B cell (primary cell): ENCODE measurements at regions of chr2 and their contacts with region 1.

Region 1: GRCh38 chr2:25362049-25362433 is 20.3 kb upstream of the DNMT3A start:
- DNase-seq: peak; percentile 95
- ATAC-seq: peak; percentile 83
- H3K4me3 ChIP-seq: peak overlapping the region; percentile 58 to 91 (median 72)
- H3K4me3 Mint-ChIP-seq: peak overlapping the region; percentile 89
- H3K27ac ChIP-seq: peak overlapping the region; percentile 97 to 98
- H3K27ac Mint-ChIP-seq: peak overlapping the region; percentile 96
- H3K4me1 ChIP-seq: peaks cover 7 to 18% of the 10 kb centered on the region in 2 donors
- H3K4me1 Mint-ChIP-seq: peaks cover 28% of the 10 kb centered on the region
- H3K27me3 ChIP-seq: no peaks in the 10 kb centered on the region
- H3K27me3 Mint-ChIP-seq: no peaks in the 10 kb centered on the region
- CTCF ChIP-seq: peak; percentile 93

Region 2: GRCh38 chr2:25145803-25146202 is 216.2 kb before region 1 on chr2:
- CTCF ChIA-PET with region 1: no interaction called
- POLR2A ChIA-PET with region 1: no interaction called
- intact Hi-C with region 1: no loop called
- DNase-seq: no peak
- ATAC-seq: no peak
- H3K4me3 ChIP-seq: no peak overlapping the region
- H3K4me3 Mint-ChIP-seq: no peak overlapping the region
- H3K27ac ChIP-seq: no peak overlapping the region
- H3K27ac Mint-ChIP-seq: no peak overlapping the region
- H3K4me1 ChIP-seq: no peaks in the 10 kb centered on the region
- H3K4me1 Mint-ChIP-seq: no peaks in the 10 kb centered on the region
- H3K27me3 ChIP-seq: peaks cover 0 to 2% (median 0%) of the 10 kb centered on the region in 4 experiments
- H3K27me3 Mint-ChIP-seq: no peaks in the 10 kb centered on the region
- CTCF ChIP-seq: no peak

Region 3: GRCh38 chr2:25165992-25166875 is 195.8 kb before region 1 on chr2:
- CTCF ChIA-PET with region 1: interaction called, 11 read pairs
- POLR2A ChIA-PET with region 1: interaction called, 4 read pairs
- intact Hi-C with region 1: loop called (anchors 10 kb)
- DNase-seq: peak; percentile 90
- ATAC-seq: peak; percentile 95
- H3K4me3 ChIP-seq: no peak overlapping the region
- H3K4me3 Mint-ChIP-seq: peak overlapping the region; percentile 76
- H3K27ac ChIP-seq: peak overlapping the region; percentile 34 to 46
- H3K27ac Mint-ChIP-seq: no peak overlapping the region
- H3K4me1 ChIP-seq: peaks cover 36 to 40% of the 10 kb centered on the region in 2 donors
- H3K4me1 Mint-ChIP-seq: peaks cover 41% of the 10 kb centered on the region
- H3K27me3 ChIP-seq: peaks cover 0 to 34% (median 21%) of the 10 kb centered on the region in 4 experiments
- H3K27me3 Mint-ChIP-seq: peaks cover 36% of the 10 kb centered on the region
- CTCF ChIP-seq: peak; percentile 67

Region 4: DNA sequence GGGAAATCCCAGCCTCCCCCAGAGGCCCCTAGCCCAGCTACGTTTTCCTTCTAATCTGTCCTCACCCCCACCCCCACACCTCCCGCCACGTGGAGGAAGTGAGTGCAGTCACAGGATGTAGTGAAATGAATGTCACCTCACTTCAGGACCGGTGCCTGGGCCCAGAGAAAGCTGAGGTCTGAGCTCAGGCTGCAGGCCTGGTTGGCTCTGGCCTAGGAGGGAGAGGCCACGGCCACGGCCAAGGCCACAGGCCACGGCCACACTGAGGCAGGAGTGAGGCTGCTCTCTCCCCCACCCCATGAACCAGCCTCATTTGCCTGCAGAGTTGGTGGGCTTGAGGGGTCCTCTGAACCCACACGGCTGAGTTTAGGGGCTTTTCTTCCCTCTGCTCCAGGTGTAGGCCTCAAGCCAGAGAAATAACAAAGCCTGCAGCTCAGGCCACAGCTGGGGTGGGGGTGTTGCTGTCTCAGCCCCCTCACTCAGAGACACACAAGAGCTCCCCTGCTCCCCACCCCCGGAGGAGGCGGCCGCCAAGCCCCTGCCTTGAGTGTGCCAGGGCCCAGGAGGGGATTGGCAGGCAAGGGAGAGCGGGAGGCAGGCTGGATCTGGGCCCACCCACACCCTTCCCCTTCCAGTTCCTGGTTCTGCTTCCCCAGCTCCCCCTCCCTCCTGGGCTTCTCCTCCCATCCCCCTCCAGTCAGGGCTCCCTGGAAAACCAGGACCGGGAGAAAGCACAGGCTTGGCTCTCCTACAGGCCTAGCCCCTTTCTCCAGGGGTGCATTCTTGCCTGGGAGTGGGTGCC is 47.3 kb before region 1 on chr2:
- CTCF ChIA-PET with region 1: interaction called, 11 read pairs
- POLR2A ChIA-PET with region 1: no interaction called
- intact Hi-C with region 1: no loop called
- DNase-seq: peak; percentile 40
- ATAC-seq: peak; percentile 70
- H3K4me3 ChIP-seq: no peak overlapping the region
- H3K4me3 Mint-ChIP-seq: peak overlapping the region; percentile 34
- H3K27ac ChIP-seq: no peak overlapping the region
- H3K27ac Mint-ChIP-seq: peak overlapping the region; percentile 41
- H3K4me1 ChIP-seq: peaks cover 26 to 28% of the 10 kb centered on the region in 2 donors
- H3K4me1 Mint-ChIP-seq: peaks cover 36% of the 10 kb centered on the region
- H3K27me3 ChIP-seq: peaks cover 0 to 6% (median 0%) of the 10 kb centered on the region in 4 experiments
- H3K27me3 Mint-ChIP-seq: no peaks in the 10 kb centered on the region
- CTCF ChIP-seq: no peak

Region 5: GRCh38 chr2:25402477-25402876 is 40.4 kb after region 1 on chr2:
- CTCF ChIA-PET with region 1: interaction called, 10 read pairs
- POLR2A ChIA-PET with region 1: no interaction called
- intact Hi-C with region 1: loop called (anchors 1 kb)
- DNase-seq: peak; percentile 50
- ATAC-seq: peak; percentile 23
- H3K4me3 ChIP-seq: no peak overlapping the region
- H3K4me3 Mint-ChIP-seq: peak overlapping the region; percentile 46
- H3K27ac ChIP-seq: peak overlapping the region; percentile 69 to 77
- H3K27ac Mint-ChIP-seq: peak overlapping the region; percentile 79
- H3K4me1 ChIP-seq: peaks cover 72 to 87% of the 10 kb centered on the region in 2 donors
- H3K4me1 Mint-ChIP-seq: peaks cover 81% of the 10 kb centered on the region
- H3K27me3 ChIP-seq: no peaks in the 10 kb centered on the region
- H3K27me3 Mint-ChIP-seq: no peaks in the 10 kb centered on the region
- CTCF ChIP-seq: no peak

Region 6: DNA sequence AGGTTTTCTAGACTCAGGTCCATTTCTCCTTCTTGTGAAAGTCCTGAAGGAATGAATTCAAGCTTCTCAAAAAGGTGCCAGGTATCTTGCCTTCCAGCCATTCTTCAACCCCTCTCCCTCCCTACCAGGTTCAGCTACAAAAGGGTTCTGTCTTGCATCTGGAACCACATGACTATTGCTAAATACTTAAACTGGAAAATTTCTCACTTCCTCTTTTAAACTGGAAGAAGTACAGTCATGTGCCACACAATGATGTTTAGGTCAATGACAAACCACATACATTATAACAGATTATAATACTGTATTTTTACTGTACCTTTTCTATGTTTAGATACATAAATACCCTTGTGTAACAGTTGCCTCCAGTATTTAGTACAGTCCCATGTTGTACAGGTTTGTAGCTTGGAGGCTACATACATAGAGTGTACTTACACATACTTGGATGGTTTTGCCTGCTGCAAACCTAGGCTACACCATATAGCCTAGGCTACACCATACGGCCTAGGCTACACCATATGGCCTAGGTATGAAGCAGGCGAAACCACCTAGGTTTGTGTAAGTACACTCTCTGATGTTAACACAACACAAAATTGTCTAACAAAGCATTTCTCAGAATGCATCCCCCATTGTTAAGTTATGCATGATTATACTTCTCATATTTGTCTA is 121.7 kb after region 1 on chr2:
- CTCF ChIA-PET with region 1: interaction called, 5 read pairs
- POLR2A ChIA-PET with region 1: interaction called, 3 read pairs
- intact Hi-C with region 1: loop called (anchors 1 kb)
- DNase-seq: peak; percentile 70
- ATAC-seq: peak; percentile 83
- H3K4me3 ChIP-seq: no peak overlapping the region
- H3K4me3 Mint-ChIP-seq: peak overlapping the region; percentile 37
- H3K27ac ChIP-seq: peak overlapping the region; percentile 28 to 37
- H3K27ac Mint-ChIP-seq: peak overlapping the region; percentile 80
- H3K4me1 ChIP-seq: peaks cover 20 to 24% of the 10 kb centered on the region in 2 donors
- H3K4me1 Mint-ChIP-seq: peaks cover 34% of the 10 kb centered on the region
- H3K27me3 ChIP-seq: no peaks in the 10 kb centered on the region
- H3K27me3 Mint-ChIP-seq: no peaks in the 10 kb centered on the region
- CTCF ChIP-seq: no peak

Region 7: GRCh38 chr2:25567406-25567805 is 205.4 kb after region 1 on chr2:
- CTCF ChIA-PET with region 1: interaction called, 17 read pairs
- POLR2A ChIA-PET with region 1: no interaction called
- intact Hi-C with region 1: loop called (anchors 5 kb)
- DNase-seq: peak; percentile 71
- ATAC-seq: peak; percentile 69
- H3K4me3 ChIP-seq: no peak overlapping the region
- H3K4me3 Mint-ChIP-seq: no peak overlapping the region
- H3K27ac ChIP-seq: peak overlapping the region in 1 of 2 donors; percentile 2
- H3K27ac Mint-ChIP-seq: no peak overlapping the region
- H3K4me1 ChIP-seq: peaks cover 17 to 19% of the 10 kb centered on the region in 2 donors
- H3K4me1 Mint-ChIP-seq: peaks cover 28% of the 10 kb centered on the region
- H3K27me3 ChIP-seq: no peaks in the 10 kb centered on the region
- H3K27me3 Mint-ChIP-seq: no peaks in the 10 kb centered on the region
- CTCF ChIP-seq: peak; percentile 77